Activated CD4-positive, alpha-beta memory T cell treated with anti-CD3 and anti-CD28 coated beads, Interleukin-2, amount 10 ng/mL, durations not matched to agents 7 days and 5 days (primary cell): ENCODE measurements at regions of chr6 and their contacts with region 1.

Region 1: GRCh38 chr6:105981002-105981887 is 104.9 kb upstream of the PRDM1 start:
- DNase-seq: peak; percentile 70
- H3K4me3 Mint-ChIP-seq: peak overlapping the region; percentile 87
- H3K27ac Mint-ChIP-seq: peak overlapping the region; percentile 93
- H3K4me1 Mint-ChIP-seq: peaks cover 78% of the 10 kb centered on the region
- H3K27me3 Mint-ChIP-seq: no peaks in the 10 kb centered on the region

Region 2: DNA sequence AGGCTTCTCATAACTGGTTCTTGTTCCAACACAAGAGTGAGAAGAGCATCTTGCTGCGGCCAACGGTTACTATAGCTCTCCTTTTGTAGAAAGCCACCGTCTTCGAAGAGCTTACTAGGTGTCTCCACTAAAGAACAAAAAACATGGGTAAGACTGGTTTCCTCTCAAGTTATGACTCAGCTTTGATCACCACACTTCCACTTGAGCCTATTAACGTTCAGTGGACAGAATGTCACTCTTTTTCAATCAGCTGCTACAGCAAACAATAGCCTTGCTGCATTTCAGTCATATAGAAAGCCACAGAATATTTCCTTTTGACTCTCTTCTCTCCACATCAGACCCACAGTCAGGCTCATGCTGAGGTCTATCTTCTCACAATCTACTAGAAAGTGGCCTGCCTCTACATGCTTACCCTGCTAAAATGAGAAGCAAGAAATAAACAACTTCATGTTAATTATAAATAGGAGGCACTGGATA is 334.8 kb before region 1 on chr6:
- CTCF ChIA-PET with region 1: no interaction called
- POLR2A ChIA-PET with region 1: interaction called, 11 read pairs
- DNase-seq: peak; percentile 77
- H3K4me3 Mint-ChIP-seq: peak overlapping the region; percentile 40
- H3K27ac Mint-ChIP-seq: peak overlapping the region; percentile 98
- H3K4me1 Mint-ChIP-seq: peaks cover 86% of the 10 kb centered on the region
- H3K27me3 Mint-ChIP-seq: no peaks in the 10 kb centered on the region

Region 3: GRCh38 chr6:105898286-105898685 is 83.0 kb before region 1 on chr6:
- CTCF ChIA-PET with region 1: interaction called, 4 read pairs
- POLR2A ChIA-PET with region 1: interaction called, 41 read pairs
- DNase-seq: peak; percentile 62
- H3K4me3 Mint-ChIP-seq: no peak overlapping the region
- H3K27ac Mint-ChIP-seq: no peak overlapping the region
- H3K4me1 Mint-ChIP-seq: peaks cover 27% of the 10 kb centered on the region
- H3K27me3 Mint-ChIP-seq: no peaks in the 10 kb centered on the region

Region 4: DNA sequence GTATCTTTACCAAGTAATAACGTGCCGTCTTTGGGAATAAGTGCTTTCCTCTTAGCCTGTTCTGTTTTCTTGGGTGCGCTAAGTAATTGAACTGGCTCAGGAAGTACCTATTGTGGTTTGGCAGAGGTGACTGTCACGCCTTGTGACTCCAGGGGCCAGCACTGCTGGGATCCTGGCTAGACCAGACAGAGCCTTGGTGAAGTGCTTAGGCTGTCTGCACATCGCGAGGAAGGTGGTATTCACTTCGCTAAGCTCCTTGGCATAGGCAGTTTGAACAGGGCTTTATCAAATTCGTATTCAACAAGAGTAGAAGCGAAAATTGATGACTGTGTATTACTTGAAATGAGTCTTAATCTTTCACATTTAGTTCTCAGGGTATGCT is 122.5 kb after region 1 on chr6:
- CTCF ChIA-PET with region 1: interaction called, 3 read pairs
- POLR2A ChIA-PET with region 1: interaction called, 38 read pairs
- DNase-seq: peak; percentile 63
- H3K4me3 Mint-ChIP-seq: peak overlapping the region; percentile 87
- H3K27ac Mint-ChIP-seq: peak overlapping the region; percentile 97
- H3K4me1 Mint-ChIP-seq: peaks cover 76% of the 10 kb centered on the region
- H3K27me3 Mint-ChIP-seq: no peaks in the 10 kb centered on the region